ENCODE measurements at regions of chr4 and their contacts with region 1.

Region 1: DNA sequence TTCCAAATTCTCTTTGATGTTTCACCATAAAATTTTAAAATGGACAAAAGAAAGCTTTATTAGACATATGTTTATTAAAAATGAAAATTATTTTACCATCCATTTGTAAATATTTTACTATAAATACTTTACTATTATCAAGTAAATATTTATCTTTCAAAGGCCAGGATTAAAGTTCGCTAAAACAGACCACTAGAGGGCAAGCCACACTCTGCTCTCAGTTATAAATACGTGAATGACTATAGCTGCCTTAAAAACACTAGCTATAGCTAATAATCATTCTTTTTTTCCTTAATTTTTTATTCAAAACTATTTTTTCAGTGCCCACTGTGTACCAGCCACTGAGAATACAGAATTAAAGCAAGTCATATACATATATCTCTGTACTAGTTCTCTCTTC is 38.6 kb downstream of the UNC5C start:
- DNase-seq: peak; percentile 46
- H3K4me3 Mint-ChIP-seq: no peak overlapping the region
- H3K27ac Mint-ChIP-seq: no peak overlapping the region
- H3K4me1 Mint-ChIP-seq: peaks cover 17% of the 10 kb centered on the region
- H3K27me3 Mint-ChIP-seq: no peaks in the 10 kb centered on the region
- CTCF ChIP-seq: peak; percentile 59

Region 2: GRCh38 chr4:95544113-95545103 is 34.3 kb after region 1 on chr4:
- CTCF ChIA-PET with region 1: interaction called, 10 read pairs
- POLR2A ChIA-PET with region 1: no interaction called
- intact Hi-C with region 1: no loop called
- DNase-seq: no peak
- H3K4me3 Mint-ChIP-seq: no peak overlapping the region
- H3K27ac Mint-ChIP-seq: no peak overlapping the region
- H3K4me1 Mint-ChIP-seq: no peaks in the 10 kb centered on the region
- H3K27me3 Mint-ChIP-seq: peaks cover 36% of the 10 kb centered on the region
- CTCF ChIP-seq: no peak

Region 3: DNA sequence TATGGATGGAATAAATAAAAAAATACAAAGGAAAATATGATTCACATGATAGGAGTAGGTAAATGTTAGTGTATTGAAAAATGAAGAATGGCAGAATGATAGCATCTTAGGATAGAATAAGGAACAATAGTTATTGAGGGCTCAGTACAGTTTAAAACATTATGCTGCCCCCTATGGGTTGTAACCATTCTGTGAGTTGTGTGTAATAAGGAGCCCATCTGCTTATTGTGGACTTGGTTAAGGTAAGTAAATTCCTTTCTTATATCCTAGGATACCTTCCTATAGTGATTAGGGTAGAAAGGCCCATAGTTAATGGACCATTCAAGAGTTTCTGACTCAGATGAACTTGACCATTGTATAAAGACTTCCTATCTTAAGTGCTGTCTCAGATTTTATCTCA is 525.6 kb after region 1 on chr4:
- CTCF ChIA-PET with region 1: interaction called, 4 read pairs
- POLR2A ChIA-PET with region 1: no interaction called
- intact Hi-C with region 1: loop called (anchors 5 kb)
- DNase-seq: peak; percentile 51
- H3K4me3 Mint-ChIP-seq: no peak overlapping the region
- H3K27ac Mint-ChIP-seq: no peak overlapping the region
- H3K4me1 Mint-ChIP-seq: no peaks in the 10 kb centered on the region
- H3K27me3 Mint-ChIP-seq: no peaks in the 10 kb centered on the region
- CTCF ChIP-seq: peak; percentile 36

Measured in MCF 10A (cell line).